ENCODE measurements at regions of chr2 and their contacts with region 1.

Region 1: DNA sequence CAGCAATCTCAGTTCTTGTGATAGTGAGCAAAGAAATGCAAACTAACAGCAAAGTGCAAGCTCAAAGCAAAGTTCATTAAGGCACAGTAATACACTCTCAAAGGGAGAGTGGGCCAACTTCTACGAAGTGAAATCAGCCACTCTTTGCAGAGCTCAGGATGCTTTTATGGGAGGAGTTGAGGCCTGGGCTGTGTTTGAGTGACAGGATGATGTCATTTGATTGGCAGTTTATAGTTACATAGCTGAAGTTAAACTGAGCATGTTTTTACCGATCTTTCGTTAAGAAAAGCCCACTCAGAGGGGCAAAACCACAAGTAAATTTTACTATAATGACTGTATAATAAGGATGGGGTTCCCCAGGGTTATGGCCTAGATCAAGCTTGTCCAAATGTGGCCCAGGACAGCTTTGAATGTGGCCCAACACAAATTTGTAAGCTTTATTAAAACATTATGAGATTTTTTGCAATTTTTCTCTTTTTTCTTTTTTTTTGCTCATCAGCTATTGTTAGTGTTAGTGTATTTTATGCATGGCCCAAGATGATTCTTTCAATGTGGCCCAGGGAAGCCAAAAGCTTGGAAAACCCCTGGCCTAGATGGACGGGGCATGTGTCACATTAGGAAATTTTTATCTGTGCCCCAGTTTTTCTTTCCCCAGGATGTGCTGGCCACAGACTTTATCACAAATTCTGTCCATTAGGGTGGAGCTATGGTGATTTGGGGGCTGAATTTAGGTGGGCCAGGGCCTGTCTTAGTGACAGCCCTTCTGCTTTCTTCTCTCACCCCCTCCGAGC is 8.3 kb upstream of the DNAH7 start:
- DNase-seq: no peak
- H3K4me3 ChIP-seq: no peak overlapping the region
- H3K4me3 Mint-ChIP-seq: no peak overlapping the region
- H3K27ac ChIP-seq: no peak overlapping the region
- H3K27ac Mint-ChIP-seq: no peak overlapping the region
- H3K4me1 ChIP-seq: peaks cover 25% of the 10 kb centered on the region
- H3K4me1 Mint-ChIP-seq: peaks cover 14 to 22% (median 16%) of the 10 kb centered on the region in 4 donors
- H3K27me3 ChIP-seq: no peaks in the 10 kb centered on the region
- H3K27me3 Mint-ChIP-seq: no peaks in the 10 kb centered on the region

Region 2: DNA sequence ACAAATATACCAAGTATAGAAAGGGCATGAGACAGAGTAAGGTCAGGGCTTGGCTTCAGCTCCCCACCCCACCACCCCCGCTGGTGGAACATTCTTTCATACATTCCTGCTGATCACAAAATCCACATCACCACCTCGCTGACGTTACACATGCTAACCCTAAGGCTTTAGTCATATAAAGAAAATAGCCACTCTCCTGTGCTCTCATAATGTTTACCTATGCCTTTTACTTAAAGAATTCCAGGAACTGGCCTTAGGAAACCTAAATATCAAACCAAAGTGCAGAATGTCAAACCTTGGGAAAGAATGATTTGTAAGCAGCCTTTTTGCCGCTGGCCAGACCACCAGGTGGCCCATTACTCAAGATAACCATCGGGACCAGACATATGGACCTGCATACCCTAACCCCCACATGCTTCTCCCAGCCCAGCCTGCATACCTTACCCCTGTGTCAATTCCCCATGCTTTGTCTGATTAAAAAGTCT is 556.3 kb before region 1 on chr2:
- CTCF ChIA-PET with region 1: no interaction called
- POLR2A ChIA-PET with region 1: no interaction called
- intact Hi-C with region 1: no loop called
- DNase-seq: no peak
- H3K4me3 ChIP-seq: no peak overlapping the region
- H3K4me3 Mint-ChIP-seq: no peak overlapping the region
- H3K27ac ChIP-seq: no peak overlapping the region
- H3K27ac Mint-ChIP-seq: no peak overlapping the region
- H3K4me1 ChIP-seq: no peaks in the 10 kb centered on the region
- H3K4me1 Mint-ChIP-seq: peaks cover 3 to 23% (median 8%) of the 10 kb centered on the region in 4 donors
- H3K27me3 ChIP-seq: no peaks in the 10 kb centered on the region
- H3K27me3 Mint-ChIP-seq: no peaks in the 10 kb centered on the region

Region 3: DNA sequence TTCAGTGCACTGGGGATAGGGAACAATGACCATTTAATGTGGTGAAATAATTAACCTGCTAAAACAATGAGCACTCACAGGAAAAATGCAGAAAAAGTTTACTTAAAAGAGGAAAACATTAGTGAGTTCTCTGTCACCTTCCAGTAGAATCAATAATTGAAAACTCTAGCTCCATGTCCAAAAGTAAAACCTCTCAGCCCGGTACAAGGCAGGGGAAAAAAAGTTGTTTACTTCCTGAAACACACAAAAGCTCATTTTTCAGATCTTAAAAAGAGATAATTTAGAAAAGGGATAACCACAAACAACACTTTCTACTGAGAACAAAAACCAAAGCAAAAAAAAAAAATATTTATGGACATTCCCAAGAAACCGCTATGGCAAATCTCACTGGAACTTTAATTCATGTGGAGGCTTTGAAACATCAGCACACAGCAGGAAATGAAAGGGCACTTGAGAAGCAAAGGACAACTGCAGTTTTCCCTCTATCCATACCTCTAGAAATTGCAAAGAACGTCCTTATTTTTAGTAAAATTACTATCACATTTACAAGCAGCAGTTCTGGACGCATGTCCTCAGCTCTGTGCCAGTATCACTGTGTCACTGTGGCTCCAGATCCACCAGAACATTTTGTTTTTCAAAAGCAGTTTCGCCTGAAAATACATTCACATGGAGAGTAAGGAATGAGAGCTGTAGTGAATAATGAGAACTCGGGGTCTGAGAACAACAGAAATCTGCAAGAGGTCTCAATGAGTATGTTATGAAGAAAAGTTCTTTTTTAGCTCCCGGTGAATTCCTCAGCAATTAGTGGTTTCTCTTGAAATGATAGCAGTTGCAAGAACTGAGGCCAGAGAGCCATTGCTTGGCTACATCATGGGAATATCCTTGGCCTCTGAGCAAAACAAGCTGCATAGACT is 36.3 kb after region 1 on chr2:
- CTCF ChIA-PET with region 1: interaction called, 19 read pairs
- POLR2A ChIA-PET with region 1: no interaction called
- intact Hi-C with region 1: no loop called
- DNase-seq: no peak
- H3K4me3 ChIP-seq: no peak overlapping the region
- H3K4me3 Mint-ChIP-seq: peak overlapping the region in 7 of 8 donors; percentile 9 to 64 (median 46)
- H3K27ac ChIP-seq: no peak overlapping the region
- H3K27ac Mint-ChIP-seq: peak overlapping the region in 3 of 7 donors; percentile 35 to 50 (median 48)
- H3K4me1 ChIP-seq: peaks cover 22% of the 10 kb centered on the region
- H3K4me1 Mint-ChIP-seq: peaks cover 16 to 28% (median 21%) of the 10 kb centered on the region in 4 donors
- H3K27me3 ChIP-seq: no peaks in the 10 kb centered on the region
- H3K27me3 Mint-ChIP-seq: no peaks in the 10 kb centered on the region

Region 4: DNA sequence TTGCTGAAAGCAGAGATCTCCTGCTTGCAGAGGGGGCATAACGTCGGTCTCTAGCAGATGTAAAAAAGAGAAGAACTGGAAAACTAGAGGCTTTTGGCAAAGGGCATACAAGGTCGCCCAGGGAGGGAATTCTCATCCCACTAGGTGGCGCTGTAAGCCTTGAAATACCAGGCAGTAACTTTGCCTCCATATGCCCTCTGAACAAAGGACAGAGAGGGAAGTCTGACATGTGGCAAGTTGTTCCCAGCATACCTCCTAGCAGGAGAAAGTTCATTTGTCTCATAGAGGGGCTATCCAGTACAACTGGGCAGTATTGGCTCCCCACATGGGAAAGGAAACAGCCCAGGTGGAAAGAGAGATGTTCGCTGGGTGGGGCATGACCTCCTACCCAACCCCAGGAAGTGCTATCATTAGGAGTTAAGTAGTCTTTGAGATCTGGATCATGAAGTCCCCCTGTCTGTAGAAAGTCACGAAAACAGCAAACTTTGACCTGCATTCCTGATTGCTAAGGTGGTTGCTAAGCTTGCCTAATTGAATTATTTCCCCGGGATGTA is 54.5 kb after region 1 on chr2:
- CTCF ChIA-PET with region 1: interaction called, 43 read pairs
- POLR2A ChIA-PET with region 1: interaction called, 4 read pairs
- intact Hi-C with region 1: loop called (anchors 2 kb)
- DNase-seq: peak; percentile 50 to 64 (median 60)
- H3K4me3 ChIP-seq: no peak overlapping the region
- H3K4me3 Mint-ChIP-seq: peak overlapping the region in 6 of 8 donors; percentile 6 to 62 (median 34)
- H3K27ac ChIP-seq: peak overlapping the region; percentile 33
- H3K27ac Mint-ChIP-seq: peak overlapping the region in 6 of 7 donors; percentile 66 to 94 (median 89)
- H3K4me1 ChIP-seq: peaks cover 12% of the 10 kb centered on the region
- H3K4me1 Mint-ChIP-seq: peaks cover 3 to 18% (median 10%) of the 10 kb centered on the region in 4 donors
- H3K27me3 ChIP-seq: no peaks in the 10 kb centered on the region
- H3K27me3 Mint-ChIP-seq: no peaks in the 10 kb centered on the region

Region 5: GRCh38 chr2:196182439-196183171 is 105.6 kb after region 1 on chr2:
- CTCF ChIA-PET with region 1: interaction called, 9 read pairs
- POLR2A ChIA-PET with region 1: interaction called, 12 read pairs
- intact Hi-C with region 1: no loop called
- DNase-seq: peak in 1 of 5 donors; percentile 53
- H3K4me3 ChIP-seq: peak overlapping the region; percentile 2 to 7
- H3K4me3 Mint-ChIP-seq: peak overlapping the region; percentile 64 to 85 (median 74)
- H3K27ac ChIP-seq: peak overlapping the region; percentile 55
- H3K27ac Mint-ChIP-seq: peak overlapping the region; percentile 91 to 98 (median 95)
- H3K4me1 ChIP-seq: peaks cover 92% of the 10 kb centered on the region
- H3K4me1 Mint-ChIP-seq: peaks cover 65 to 93% (median 80%) of the 10 kb centered on the region in 4 donors
- H3K27me3 ChIP-seq: no peaks in the 10 kb centered on the region
- H3K27me3 Mint-ChIP-seq: no peaks in the 10 kb centered on the region

Region 6: GRCh38 chr2:196213252-196213980 is 136.4 kb after region 1 on chr2:
- CTCF ChIA-PET with region 1: interaction called, 129 read pairs
- POLR2A ChIA-PET with region 1: no interaction called
- intact Hi-C with region 1: no loop called
- DNase-seq: peak in 2 of 5 donors; percentile 23 to 26
- H3K4me3 ChIP-seq: no peak overlapping the region
- H3K4me3 Mint-ChIP-seq: peak overlapping the region in 1 of 8 donors; percentile 44
- H3K27ac ChIP-seq: no peak overlapping the region
- H3K27ac Mint-ChIP-seq: peak overlapping the region; percentile 78 to 100 (median 99)
- H3K4me1 ChIP-seq: peaks cover 61% of the 10 kb centered on the region
- H3K4me1 Mint-ChIP-seq: peaks cover 45 to 80% (median 65%) of the 10 kb centered on the region in 4 donors
- H3K27me3 ChIP-seq: no peaks in the 10 kb centered on the region
- H3K27me3 Mint-ChIP-seq: no peaks in the 10 kb centered on the region

Region 7: GRCh38 chr2:196337208-196337953 is 260.4 kb after region 1 on chr2:
- CTCF ChIA-PET with region 1: interaction called, 137 read pairs
- POLR2A ChIA-PET with region 1: interaction called, 18 read pairs
- intact Hi-C with region 1: loop called (anchors 1 kb)
- DNase-seq: peak in 4 of 5 donors; percentile 23 to 32 (median 24)
- H3K4me3 ChIP-seq: no peak overlapping the region
- H3K4me3 Mint-ChIP-seq: no peak overlapping the region
- H3K27ac ChIP-seq: no peak overlapping the region
- H3K27ac Mint-ChIP-seq: no peak overlapping the region
- H3K4me1 ChIP-seq: peaks cover 4% of the 10 kb centered on the region
- H3K4me1 Mint-ChIP-seq: peaks cover 0 to 7% (median 1%) of the 10 kb centered on the region in 4 donors
- H3K27me3 ChIP-seq: no peaks in the 10 kb centered on the region
- H3K27me3 Mint-ChIP-seq: peaks cover 0 to 1% of the 10 kb centered on the region in 2 donors

Region 8: DNA sequence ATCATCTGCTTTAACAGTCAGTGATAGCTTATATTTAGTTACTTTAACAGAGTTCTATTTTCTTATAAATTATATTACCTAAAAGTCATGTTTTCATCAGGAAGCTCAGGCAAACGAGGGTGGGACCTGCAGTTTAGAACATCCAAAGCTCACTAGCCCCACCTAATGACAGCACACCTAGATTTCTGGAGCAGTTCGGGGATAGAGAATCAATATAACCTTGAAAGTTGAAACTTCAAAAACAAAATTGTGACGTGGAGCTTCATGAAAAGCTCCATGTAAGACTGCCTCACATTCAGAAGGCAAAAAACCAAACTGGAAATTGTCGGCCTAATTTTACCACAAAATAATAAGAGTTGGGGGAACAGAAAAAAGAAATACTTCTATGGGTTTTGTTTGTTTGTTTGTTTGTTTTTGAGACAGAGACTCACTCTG is 376.7 kb after region 1 on chr2:
- CTCF ChIA-PET with region 1: interaction called, 57 read pairs
- POLR2A ChIA-PET with region 1: no interaction called
- intact Hi-C with region 1: loop called (anchors 1 kb)
- DNase-seq: peak in 4 of 5 donors; percentile 14 to 26 (median 20)
- H3K4me3 ChIP-seq: no peak overlapping the region
- H3K4me3 Mint-ChIP-seq: no peak overlapping the region
- H3K27ac ChIP-seq: no peak overlapping the region
- H3K27ac Mint-ChIP-seq: no peak overlapping the region
- H3K4me1 ChIP-seq: no peaks in the 10 kb centered on the region
- H3K4me1 Mint-ChIP-seq: peaks cover 0 to 4% (median 1%) of the 10 kb centered on the region in 4 donors
- H3K27me3 ChIP-seq: peaks cover 8% of the 10 kb centered on the region
- H3K27me3 Mint-ChIP-seq: peaks cover 13 to 24% of the 10 kb centered on the region in 2 donors